Ovary (tissue), 10 donors: ENCODE measurements at regions of chr11 and their contacts with region 1.

Region 1: DNA sequence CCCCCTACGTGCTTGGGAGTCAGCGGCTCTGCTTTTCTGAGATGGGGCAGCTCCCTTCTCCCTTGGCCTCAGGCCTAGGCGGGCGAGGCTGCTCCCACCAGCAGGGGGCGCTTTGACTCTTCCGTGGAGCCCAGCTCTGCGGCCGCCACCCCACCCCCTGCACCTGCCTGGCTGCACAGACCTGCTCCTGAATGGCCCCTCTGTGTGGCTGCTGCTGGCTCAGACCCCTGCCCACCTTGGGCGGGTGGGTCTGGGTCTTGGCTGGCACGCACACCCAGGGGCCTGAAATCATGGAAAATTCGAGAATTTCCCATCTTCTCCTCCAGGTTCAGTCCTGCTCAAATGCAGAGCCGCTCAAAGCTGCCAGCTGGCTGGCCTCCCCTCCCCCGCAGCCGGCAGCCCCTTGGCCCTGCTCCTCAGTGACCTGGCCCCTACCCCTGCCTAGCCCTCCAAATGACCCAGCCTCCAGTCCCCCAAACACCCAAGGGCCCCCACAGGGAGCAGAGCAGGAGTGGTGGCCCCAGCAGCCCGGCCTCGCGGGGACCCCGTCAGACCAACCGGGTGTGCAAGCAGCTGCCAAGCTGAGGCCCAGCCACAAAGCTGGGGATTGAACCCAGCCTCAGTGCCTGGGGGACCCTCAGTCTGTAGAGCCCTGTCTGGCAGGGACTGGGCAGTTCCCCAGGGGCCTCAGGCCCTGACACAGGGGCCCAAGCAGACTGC is 9.0 kb downstream of the PRR33 start:
- DNase-seq: peak; percentile 79 to 92 (median 89)
- H3K4me3 ChIP-seq: no peak overlapping the region
- H3K27ac ChIP-seq: no peak overlapping the region
- H3K4me1 ChIP-seq: no peaks in the 10 kb centered on the region
- H3K27me3 ChIP-seq: no peaks in the 10 kb centered on the region
- CTCF ChIP-seq: peak; percentile 85 to 92 (median 92)
- EP300 ChIP-seq: no peak
- POLR2A ChIP-seq: peak; percentile 2

Region 2: DNA sequence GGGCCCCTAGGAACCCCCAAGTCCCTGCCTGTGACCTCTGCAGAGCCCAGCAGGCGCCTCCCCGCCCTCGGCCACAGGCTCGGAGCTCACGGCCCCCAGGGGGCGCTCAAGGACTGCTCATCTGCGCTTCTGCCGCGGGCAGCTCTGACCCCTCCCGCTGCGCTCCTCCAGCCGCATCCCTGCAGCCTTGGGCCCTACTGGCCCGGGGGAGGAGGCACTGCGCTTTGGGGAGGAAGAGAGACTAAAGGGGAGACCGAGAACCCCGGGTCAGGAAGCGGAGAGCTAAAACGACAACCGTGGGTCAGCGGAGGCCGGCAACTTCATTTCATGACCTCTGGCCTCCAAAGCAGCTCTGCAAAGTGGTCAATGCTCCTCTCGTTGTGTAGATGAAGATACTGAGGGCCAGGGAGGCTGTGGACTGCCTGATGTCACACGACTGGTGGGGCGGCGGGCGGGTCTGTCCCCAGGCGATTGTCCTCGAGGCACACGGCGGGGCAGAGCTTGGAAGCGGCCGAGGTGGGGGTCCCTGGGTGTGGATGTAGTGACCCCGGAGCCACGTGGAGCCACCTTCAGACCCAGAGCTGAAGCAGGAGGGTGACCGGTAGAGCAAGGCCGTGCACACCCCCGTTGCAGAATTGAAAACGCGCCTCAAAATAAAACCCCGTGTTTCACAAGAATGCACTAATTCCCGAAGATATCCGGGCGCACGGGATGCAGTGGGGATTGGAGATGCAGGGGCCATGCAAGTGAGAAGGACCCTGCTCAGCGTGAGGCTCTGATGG is 188.4 kb before region 1 on chr11:
- intact Hi-C with region 1: loop called in 1 of 4 experiments (anchors 5 kb)
- DNase-seq: peak; percentile 73 to 92 (median 89)
- H3K4me3 ChIP-seq: peak overlapping the region; percentile 6
- H3K27ac ChIP-seq: peak overlapping the region in 1 of 2 donors; percentile 16
- H3K4me1 ChIP-seq: peaks cover 8% of the 10 kb centered on the region
- H3K27me3 ChIP-seq: no peaks in the 10 kb centered on the region
- CTCF ChIP-seq: peak; percentile 82 to 91 (median 85)
- EP300 ChIP-seq: no peak
- POLR2A ChIP-seq: no peak

Region 3: DNA sequence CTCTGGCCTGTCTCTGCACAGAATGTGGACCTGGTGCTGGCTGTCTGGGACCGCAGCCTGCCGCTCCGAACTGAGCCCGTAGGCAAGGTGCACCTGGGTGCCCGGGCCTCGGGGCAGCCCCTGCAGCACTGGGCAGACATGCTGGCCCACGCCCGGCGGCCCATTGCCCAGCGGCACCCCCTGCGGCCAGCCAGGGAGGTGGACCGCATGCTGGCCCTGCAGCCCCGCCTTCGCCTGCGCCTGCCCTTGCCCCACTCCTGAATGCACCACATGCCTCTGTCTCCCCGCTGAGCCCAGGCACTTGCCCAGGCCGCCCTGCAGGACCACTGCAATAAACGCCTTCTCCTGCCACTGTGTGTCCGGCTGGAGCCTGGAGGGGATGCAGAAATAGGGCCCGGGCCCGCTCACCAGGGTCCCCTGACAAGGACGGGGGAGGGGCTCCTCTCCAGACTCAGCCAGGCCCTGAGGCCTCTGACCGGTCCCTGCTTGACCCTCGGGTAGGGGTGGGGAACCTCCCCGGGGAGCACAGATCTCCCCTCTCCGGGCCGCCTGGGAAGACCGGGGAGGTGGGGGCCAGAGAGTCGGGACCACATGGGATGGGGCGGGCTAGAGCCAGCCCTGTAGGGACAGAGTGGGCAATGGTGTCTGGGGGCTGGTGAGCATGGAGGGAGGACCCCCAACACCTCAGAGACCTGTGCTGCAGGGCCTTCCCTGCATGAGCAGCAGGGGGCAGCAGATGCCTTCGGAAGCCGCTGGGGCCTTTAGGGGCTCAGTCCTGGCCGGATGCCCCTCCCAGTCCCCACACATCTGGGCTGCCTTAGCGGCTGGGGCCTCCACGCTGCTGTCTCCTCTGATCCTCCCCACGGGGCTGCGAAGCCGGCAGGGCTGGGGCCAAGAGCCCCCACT is 45.3 kb before region 1 on chr11:
- intact Hi-C with region 1: loop called in 1 of 4 experiments (anchors 5 kb)
- DNase-seq: peak; percentile 69 to 88 (median 78)
- H3K4me3 ChIP-seq: no peak overlapping the region
- H3K27ac ChIP-seq: no peak overlapping the region
- H3K4me1 ChIP-seq: peaks cover 1% of the 10 kb centered on the region
- H3K27me3 ChIP-seq: no peaks in the 10 kb centered on the region
- CTCF ChIP-seq: peak; percentile 54 to 90 (median 84)
- EP300 ChIP-seq: no peak
- POLR2A ChIP-seq: no peak

Region 4: GRCh38 chr11:2122222-2123085 is 239.8 kb after region 1 on chr11:
- intact Hi-C with region 1: no loop called
- DNase-seq: peak in 1 of 5 donors; percentile 31
- H3K4me3 ChIP-seq: no peak overlapping the region
- H3K27ac ChIP-seq: no peak overlapping the region
- H3K4me1 ChIP-seq: peaks cover 2% of the 10 kb centered on the region
- H3K27me3 ChIP-seq: no peaks in the 10 kb centered on the region
- CTCF ChIP-seq: no peak
- EP300 ChIP-seq: no peak
- POLR2A ChIP-seq: no peak